AG04449 (cell line): ENCODE measurements at regions of chr2 and their contacts with region 1.

Region 1: DNA sequence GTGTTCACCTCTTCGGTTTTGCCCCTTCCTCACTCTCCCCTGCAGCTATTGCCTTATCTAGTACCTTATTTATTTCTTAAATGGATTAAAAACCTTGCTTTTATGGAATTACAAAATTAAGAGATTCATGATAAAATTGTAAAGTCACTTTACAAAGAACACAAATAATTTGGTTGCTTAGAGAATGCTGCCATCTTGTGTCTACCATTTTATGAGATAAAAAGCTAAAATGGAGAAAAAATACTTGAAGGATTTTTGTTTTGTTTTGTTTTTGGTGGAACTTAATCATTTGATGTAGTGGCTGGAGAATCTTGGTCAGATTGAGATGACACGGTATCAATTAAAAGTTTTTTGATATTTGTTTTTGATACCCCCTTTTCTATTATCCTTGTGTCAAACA is 69.6 kb downstream of the R3HDM1 start:
- DNase-seq: no peak
- H3K4me3 ChIP-seq: no peak overlapping the region
- CTCF ChIP-seq: no peak

Region 2: GRCh38 chr2:135573620-135574019 is 27.3 kb before region 1 on chr2:
- CTCF ChIA-PET with region 1: no interaction called
- POLR2A ChIA-PET with region 1: no interaction called
- DNase-seq: no peak
- H3K4me3 ChIP-seq: no peak overlapping the region
- CTCF ChIP-seq: no peak

Region 3: GRCh38 chr2:135585586-135585985 is 15.3 kb before region 1 on chr2:
- CTCF ChIA-PET with region 1: interaction called, 39 read pairs
- POLR2A ChIA-PET with region 1: no interaction called
- DNase-seq: no peak
- H3K4me3 ChIP-seq: no peak overlapping the region
- CTCF ChIP-seq: no peak

Region 4: DNA sequence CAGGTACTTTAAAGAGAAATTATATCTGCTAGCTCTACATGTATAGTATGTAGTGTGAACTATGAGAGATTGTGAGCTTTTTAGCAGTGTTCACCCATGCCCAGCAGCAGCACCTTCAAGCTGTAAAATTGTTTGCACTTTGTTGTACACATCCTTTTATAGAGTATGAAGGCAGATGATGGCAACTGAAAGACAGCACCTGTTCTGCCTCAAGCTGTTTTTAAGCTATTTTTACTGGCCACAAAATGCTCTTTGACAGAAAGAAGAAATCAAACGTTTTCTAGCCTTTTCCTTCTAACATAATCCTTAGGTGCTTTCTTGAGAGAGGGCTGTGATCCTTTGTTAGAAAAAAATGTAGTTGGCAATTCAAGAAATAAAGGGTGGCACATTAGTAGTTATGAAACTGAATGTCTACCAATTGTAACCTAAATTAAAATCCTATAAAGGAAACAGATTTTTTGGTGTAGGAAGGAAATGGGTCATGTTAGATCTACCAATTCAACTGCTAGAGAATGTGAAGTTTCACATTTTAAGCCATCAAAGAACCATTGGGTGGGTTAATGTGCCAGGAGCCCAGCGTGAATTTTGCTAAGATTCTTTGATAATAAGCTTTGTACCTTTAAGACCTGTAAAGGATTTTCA is 10.2 kb before region 1 on chr2:
- CTCF ChIA-PET with region 1: interaction called, 39 read pairs
- POLR2A ChIA-PET with region 1: no interaction called
- DNase-seq: no peak
- H3K4me3 ChIP-seq: no peak overlapping the region
- CTCF ChIP-seq: no peak